AG04450 (cell line): ENCODE measurements at regions of chr1 and their contacts with region 1.

Region 1: GRCh38 chr1:150529017-150529416 is 13.5 kb downstream of the FALEC start:
- DNase-seq: peak; percentile 29
- H3K4me3 ChIP-seq: no peak overlapping the region
- H3K27ac ChIP-seq: peak overlapping the region; percentile 57
- H3K27me3 ChIP-seq: no peaks in the 10 kb centered on the region
- CTCF ChIP-seq: no peak

Region 2: DNA sequence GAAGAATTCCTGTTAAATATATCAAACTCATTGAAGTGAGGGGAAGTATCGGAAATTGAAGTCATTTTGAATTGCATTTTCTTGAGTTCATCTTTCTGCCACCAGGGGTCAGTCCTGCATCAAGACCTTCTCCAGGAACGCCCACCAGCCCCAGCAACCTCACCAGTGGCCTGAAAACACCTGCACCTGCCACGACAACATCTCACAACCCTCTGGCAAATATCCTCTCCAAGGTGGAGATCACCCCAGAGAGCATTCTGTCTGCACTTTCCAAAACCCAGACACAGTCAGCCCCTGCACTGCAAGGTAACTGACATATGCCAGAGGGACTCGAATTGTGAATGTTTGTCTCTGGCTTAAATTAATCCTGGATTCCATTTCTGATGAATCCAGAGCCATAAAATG is 64.6 kb before region 1 on chr1:
- CTCF ChIA-PET with region 1: interaction called, 10 read pairs
- POLR2A ChIA-PET with region 1: no interaction called
- DNase-seq: peak; percentile 18
- H3K4me3 ChIP-seq: no peak overlapping the region
- H3K27ac ChIP-seq: no peak overlapping the region
- H3K27me3 ChIP-seq: no peaks in the 10 kb centered on the region
- CTCF ChIP-seq: peak; percentile 81

Region 3: DNA sequence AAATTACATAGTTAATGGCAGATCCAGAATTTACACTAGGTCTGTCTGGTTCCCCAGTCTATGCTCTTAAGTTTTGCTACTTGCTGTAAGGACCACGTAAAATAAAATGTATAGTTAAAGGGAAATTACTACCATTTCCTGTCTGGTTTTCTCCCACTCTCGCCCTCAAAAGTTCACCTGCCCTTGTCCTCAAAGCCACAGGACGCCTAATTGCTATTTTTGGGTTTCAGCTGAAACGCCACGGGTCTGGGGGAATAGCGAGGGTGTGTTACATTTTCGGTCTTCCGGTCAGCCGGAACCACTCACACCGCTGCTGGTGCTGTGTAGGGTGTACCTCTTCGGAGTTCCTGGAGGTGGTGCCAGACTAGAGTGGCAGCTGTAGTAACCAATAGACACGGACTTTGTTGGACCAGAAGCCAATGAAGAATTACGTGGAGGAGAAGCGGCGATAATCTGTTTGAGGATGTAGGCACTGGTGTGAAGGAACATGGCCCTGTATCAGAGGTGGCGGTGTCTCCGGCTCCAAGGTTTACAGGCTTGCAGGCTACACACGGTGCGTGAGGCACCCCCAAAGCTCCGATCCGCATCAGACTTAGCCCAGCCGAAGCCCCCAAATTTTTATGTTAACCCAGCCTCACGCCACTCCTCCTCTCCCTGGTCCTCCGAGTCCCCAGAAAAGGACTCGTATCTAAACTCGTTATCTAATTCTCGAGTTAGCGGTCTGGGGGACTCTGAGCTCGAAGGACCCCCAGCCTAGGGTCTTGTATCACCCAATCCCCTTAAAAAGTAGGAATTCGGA is 41.9 kb before region 1 on chr1 and contains the start of gene TARS2:
- CTCF ChIA-PET with region 1: interaction called, 10 read pairs
- POLR2A ChIA-PET with region 1: no interaction called
- DNase-seq: peak; percentile 98
- H3K4me3 ChIP-seq: peak within 1 kb of the TSS; percentile 96
- H3K27ac ChIP-seq: peak within 1 kb of the TSS; percentile 53
- H3K27me3 ChIP-seq: no peaks in the 10 kb centered on the region
- CTCF ChIP-seq: peak; percentile 23; the same call in 1 of the 2 replicates
- polyA plus RNA-seq, gene TARS2: 14.5 and 14.6 TPM in 2 replicates

Region 4: GRCh38 chr1:150515328-150516048 is 13.5 kb before region 1 on chr1 and contains the start of gene FALEC:
- CTCF ChIA-PET with region 1: interaction called, 26 read pairs
- POLR2A ChIA-PET with region 1: interaction called, 12 read pairs
- DNase-seq: peak; percentile 89
- H3K4me3 ChIP-seq: peak within 1 kb of the TSS; percentile 66
- H3K27ac ChIP-seq: peak within 1 kb of the TSS; percentile 47
- H3K27me3 ChIP-seq: no peaks in the 10 kb centered on the region
- CTCF ChIP-seq: no peak
- polyA plus RNA-seq, gene FALEC: not detected in 2 replicates

Region 5: GRCh38 chr1:150543500-150544141 is 14.6 kb after region 1 on chr1:
- CTCF ChIA-PET with region 1: interaction called, 18 read pairs
- POLR2A ChIA-PET with region 1: interaction called, 6 read pairs
- DNase-seq: no peak
- H3K4me3 ChIP-seq: no peak overlapping the region
- H3K27ac ChIP-seq: no peak overlapping the region
- H3K27me3 ChIP-seq: no peaks in the 10 kb centered on the region
- CTCF ChIP-seq: no peak

Region 6: GRCh38 chr1:151036363-151036762 is 507.3 kb after region 1 on chr1 and contains the start of gene BNIPL:
- CTCF ChIA-PET with region 1: no interaction called
- POLR2A ChIA-PET with region 1: no interaction called
- DNase-seq: no peak
- H3K4me3 ChIP-seq: no peak within 1 kb of the TSS
- H3K27ac ChIP-seq: no peak within 1 kb of the TSS
- H3K27me3 ChIP-seq: no peaks in the 10 kb centered on the region
- CTCF ChIP-seq: no peak
- polyA plus RNA-seq, gene BNIPL: 0.09 and 0.16 TPM in 2 replicates